OCI-LY7 (cell line): ENCODE measurements at regions of chr13 and their contacts with region 1.

Region 1: GRCh38 chr13:49443704-49444523 is at the starts of genes CAB39L and SETDB2:
- DNase-seq: peak; percentile 100
- H3K4me3 ChIP-seq: peak within 1 kb of the TSS; percentile 82
- H3K27ac ChIP-seq: peak within 1 kb of the TSS; percentile 90
- H3K4me1 ChIP-seq: peaks cover 52% of the 10 kb centered on the region
- CTCF ChIP-seq: peak; percentile 65
- total RNA-seq, gene CAB39L: 5.4 and 9.6 TPM in 2 replicates
- total RNA-seq, gene SETDB2: 22.0 and 23.3 TPM in 2 replicates

Region 2: GRCh38 chr13:49062297-49062903 is 381.5 kb before region 1 on chr13:
- CTCF ChIA-PET with region 1: no interaction called
- POLR2A ChIA-PET with region 1: no interaction called
- intact Hi-C with region 1: no loop called
- DNase-seq: no peak
- H3K4me3 ChIP-seq: no peak overlapping the region
- H3K27ac ChIP-seq: no peak overlapping the region
- H3K4me1 ChIP-seq: no peaks in the 10 kb centered on the region
- CTCF ChIP-seq: no peak

Region 3: DNA sequence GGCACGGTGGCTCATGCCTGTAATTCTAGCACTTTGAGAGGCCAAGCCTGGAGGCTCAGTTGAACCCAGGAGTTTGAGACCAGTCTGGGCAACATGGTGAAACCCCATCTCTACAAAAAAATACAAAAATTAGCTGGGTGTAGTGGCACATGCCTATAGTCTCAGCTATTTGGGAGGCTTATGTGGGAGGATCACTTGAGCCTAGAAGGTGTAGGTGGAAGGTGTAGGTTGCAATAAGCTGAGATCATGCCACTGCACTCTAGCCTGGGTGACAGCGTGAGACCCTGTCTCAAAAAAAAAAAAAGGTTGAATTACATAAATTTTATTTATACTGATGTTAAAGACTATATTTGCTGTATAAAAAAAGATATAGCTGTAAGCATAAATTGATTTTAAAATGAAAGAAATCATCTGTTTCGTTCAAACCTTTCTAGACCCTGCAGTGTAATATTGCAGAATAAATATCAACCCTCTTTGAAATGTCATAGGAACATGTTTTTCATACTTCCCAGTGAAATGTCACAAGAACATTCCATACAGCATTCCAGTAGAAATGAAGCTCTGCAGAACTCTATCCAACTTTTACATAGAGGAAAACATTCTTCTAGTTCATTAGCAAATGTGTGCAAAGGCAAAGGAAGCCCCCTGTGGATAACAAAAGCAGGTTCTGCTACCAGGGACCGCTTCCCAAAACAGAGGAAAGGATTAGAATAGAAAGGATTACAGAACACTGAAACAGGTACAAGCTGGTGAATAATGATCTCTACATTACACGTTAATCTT is 76.1 kb before region 1 on chr13:
- CTCF ChIA-PET with region 1: interaction called, 4 read pairs
- POLR2A ChIA-PET with region 1: interaction called, 139 read pairs
- intact Hi-C with region 1: loop called (anchors 1 kb)
- DNase-seq: no peak
- H3K4me3 ChIP-seq: peak overlapping the region; percentile 53
- H3K27ac ChIP-seq: peak overlapping the region; percentile 98
- H3K4me1 ChIP-seq: peaks cover 81% of the 10 kb centered on the region
- CTCF ChIP-seq: 0 out of 2 replicates have a peak, but pooled peaks have one; percentile 12

Region 4: GRCh38 chr13:49421391-49421790 is 22.5 kb before region 1 on chr13:
- CTCF ChIA-PET with region 1: interaction called, 3 read pairs
- POLR2A ChIA-PET with region 1: interaction called, 22 read pairs
- intact Hi-C with region 1: no loop called
- DNase-seq: peak; percentile 83
- H3K4me3 ChIP-seq: no peak overlapping the region
- H3K27ac ChIP-seq: no peak overlapping the region
- H3K4me1 ChIP-seq: peaks cover 54% of the 10 kb centered on the region
- CTCF ChIP-seq: peak; percentile 80

Region 5: DNA sequence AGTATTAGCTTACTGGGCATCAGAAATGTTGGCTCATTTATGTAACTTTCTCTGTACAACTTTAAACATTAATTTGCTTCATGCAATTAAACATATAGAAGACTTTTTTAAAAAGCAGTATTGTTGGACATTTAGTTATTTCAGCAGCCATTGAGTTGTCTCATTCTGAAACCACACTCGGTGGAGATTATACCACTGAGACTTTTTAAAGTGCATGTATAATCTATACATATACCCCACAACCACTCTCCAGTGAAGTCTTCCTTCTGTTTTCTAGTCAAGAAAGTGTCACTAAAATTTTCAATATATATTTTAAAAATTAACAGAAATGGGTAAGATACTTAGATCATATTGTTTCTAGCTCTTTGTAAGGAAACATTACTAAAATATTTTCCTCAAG is 15.7 kb after region 1 on chr13:
- CTCF ChIA-PET with region 1: no interaction called
- POLR2A ChIA-PET with region 1: interaction called, 13 read pairs
- intact Hi-C with region 1: no loop called
- DNase-seq: no peak
- H3K4me3 ChIP-seq: no peak overlapping the region
- H3K27ac ChIP-seq: no peak overlapping the region
- H3K4me1 ChIP-seq: peaks cover 13% of the 10 kb centered on the region
- CTCF ChIP-seq: no peak

Region 6: DNA sequence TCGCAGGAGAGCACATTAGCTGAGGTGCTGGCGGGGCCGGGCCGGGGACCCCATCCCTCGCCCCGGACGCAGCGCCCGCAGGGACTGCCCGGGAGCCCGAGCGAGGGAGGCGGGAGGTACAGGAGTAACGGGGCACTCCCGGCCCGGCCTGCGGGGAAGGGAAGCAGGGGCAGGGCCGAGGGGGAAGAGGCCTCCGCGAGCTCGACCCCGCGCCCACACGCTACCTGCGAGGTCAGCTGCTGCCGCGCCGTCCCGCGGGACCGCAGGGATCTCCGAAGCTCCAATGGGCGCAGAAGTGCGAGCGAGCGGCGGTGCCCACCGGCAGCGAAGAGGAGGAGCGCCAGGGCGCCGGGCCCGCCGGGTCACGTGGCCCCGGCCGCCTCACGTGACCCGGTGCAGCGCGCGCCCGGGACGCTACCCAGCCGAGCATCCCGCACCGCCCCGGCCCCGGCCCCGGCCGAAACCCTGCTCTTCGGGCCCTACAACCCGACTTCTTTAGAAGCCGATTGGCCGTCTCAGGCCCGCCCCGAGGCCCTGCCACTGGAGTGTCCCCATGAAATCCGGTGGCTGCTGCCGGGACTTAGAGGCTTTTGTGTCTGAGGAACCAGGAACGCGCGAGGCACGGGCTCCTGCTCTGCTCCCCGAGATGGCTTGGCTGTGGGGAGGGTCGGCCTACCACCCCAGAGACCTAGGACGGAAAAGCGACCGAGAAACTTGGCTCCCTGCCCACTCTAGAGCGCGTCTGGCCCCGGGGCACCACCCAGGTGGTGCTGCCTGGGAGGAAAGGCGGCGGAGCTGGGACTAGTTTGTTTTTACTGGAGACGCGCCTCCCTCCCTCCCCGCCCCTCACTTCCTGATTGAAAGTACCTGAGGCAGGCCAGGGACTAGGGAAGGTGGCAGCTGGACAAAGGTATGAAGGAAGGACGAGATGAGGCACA is 141.6 kb after region 1 on chr13 and contains the start of gene RCBTB1:
- CTCF ChIA-PET with region 1: interaction called, 3 read pairs
- POLR2A ChIA-PET with region 1: interaction called, 19 read pairs
- intact Hi-C with region 1: loop called (anchors 2 kb)
- DNase-seq: peak; percentile 84
- H3K4me3 ChIP-seq: peak within 1 kb of the TSS; percentile 90
- H3K27ac ChIP-seq: peak within 1 kb of the TSS; percentile 71
- H3K4me1 ChIP-seq: peaks cover 31% of the 10 kb centered on the region
- CTCF ChIP-seq: no peak
- total RNA-seq, gene RCBTB1: 13.4 and 15.1 TPM in 2 replicates

Region 7: DNA sequence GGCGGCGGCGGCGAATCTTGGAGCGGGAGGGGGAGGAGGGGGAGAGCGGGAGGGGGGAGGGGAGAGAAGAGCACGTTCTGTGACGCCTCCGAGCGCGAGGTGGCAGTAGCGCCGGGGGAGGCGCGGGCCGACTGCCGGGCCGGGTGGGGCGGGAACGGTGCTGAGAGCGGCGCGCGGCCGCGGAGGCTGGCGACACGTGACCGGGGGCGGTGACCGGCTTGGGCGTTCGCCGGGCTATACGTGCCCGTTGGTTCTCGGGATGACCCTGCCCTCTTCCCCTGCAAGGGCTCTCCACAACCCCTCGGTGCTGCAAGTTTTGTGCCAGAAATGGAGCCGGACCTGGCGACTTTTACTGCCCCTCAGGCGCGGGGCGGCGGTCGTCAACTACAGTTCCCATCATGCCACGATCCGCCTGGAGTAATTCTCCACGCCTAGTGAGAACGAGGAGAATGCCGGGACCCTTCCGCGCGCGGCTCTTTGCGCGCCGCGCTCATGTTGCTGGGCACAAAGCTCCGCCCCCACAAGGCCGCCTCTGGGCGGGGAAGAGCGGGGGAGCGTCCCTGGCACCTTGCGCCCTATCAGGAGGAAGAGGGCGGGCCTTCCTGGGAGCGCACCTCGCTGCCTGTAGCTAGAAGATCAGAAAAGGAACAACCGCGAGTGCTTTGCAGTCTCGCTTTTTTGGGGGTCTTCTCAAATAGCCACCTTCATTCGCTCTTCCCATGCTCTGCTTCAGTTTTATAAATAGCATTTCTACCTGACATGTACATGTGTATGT is 348.8 kb after region 1 on chr13 and contains the start of gene KPNA3:
- CTCF ChIA-PET with region 1: no interaction called
- POLR2A ChIA-PET with region 1: no interaction called
- intact Hi-C with region 1: loop called (anchors 5 kb)
- DNase-seq: peak; percentile 98
- H3K4me3 ChIP-seq: peak within 1 kb of the TSS; percentile 75
- H3K27ac ChIP-seq: peak within 1 kb of the TSS; percentile 90
- H3K4me1 ChIP-seq: peaks cover 24% of the 10 kb centered on the region
- CTCF ChIP-seq: no peak; the same call in 1 of the 2 replicates
- total RNA-seq, gene KPNA3: 17.2 and 18.2 TPM in 2 replicates